ENCODE measurements at regions of chr15 and their contacts with region 1.

Region 1: DNA sequence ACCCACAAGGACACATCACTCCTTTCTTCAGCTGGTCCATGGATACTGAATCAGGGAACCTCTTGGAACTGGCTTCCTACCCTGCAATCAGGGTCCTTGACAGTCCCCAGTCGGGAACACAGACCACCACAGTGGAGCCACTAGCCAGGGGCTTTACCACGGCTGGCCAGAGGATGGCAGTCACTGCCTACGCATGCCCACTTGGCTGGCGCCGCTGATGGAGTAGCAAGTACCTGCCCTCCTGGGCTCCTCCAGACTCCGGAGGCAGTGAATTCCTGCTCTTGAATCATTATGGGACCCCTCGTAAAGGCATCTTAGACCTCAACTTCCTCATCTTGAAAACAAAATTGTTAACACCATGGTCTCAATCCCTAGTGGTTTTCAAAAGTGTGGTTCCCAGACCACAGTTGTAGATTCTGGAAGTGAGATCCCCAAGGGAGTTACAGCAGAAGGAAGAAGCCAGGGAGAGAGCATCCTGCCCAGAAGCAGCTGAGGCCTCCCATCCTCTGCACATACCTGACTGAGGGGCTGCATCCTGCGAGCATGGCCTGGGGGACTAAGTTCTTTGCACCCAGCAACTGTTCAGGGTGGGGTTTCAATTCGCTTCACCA is 9.1 kb upstream of the SKIC8 start:
- DNase-seq: peak; percentile 41 to 86 (median 83)
- H3K4me3 ChIP-seq: peak overlapping the region in 1 of 59 donors; percentile 15
- H3K27ac ChIP-seq: no peak overlapping the region
- H3K27me3 ChIP-seq: peaks cover 0 to 25% (median 0%) of the 10 kb centered on the region in 45 donors
- CTCF ChIP-seq: peak; percentile 55 to 99 (median 91)

Region 2: GRCh38 chr15:78396976-78397375 is 88.4 kb after region 1 on chr15:
- intact Hi-C with region 1: no loop called
- DNase-seq: peak in 3 of 10 donors; percentile 7 to 49 (median 43)
- H3K4me3 ChIP-seq: no peak overlapping the region
- H3K27ac ChIP-seq: peak overlapping the region in 3 of 59 donors; percentile 3 to 16 (median 16)
- H3K27me3 ChIP-seq: peaks cover 0 to 53% (median 0%) of the 10 kb centered on the region in 45 donors
- CTCF ChIP-seq: peak in 20 of 56 donors; percentile 7 to 35 (median 16)

Region 3: GRCh38 chr15:78422571-78423340 is 114.2 kb after region 1 on chr15:
- intact Hi-C with region 1: loop called (anchors 1 to 5 kb)
- DNase-seq: peak; percentile 51 to 77 (median 65)
- H3K4me3 ChIP-seq: no peak overlapping the region
- H3K27ac ChIP-seq: no peak overlapping the region
- H3K27me3 ChIP-seq: peaks cover 0 to 18% (median 0%) of the 10 kb centered on the region in 45 donors
- CTCF ChIP-seq: peak; percentile 76 to 97 (median 92)

Region 4: DNA sequence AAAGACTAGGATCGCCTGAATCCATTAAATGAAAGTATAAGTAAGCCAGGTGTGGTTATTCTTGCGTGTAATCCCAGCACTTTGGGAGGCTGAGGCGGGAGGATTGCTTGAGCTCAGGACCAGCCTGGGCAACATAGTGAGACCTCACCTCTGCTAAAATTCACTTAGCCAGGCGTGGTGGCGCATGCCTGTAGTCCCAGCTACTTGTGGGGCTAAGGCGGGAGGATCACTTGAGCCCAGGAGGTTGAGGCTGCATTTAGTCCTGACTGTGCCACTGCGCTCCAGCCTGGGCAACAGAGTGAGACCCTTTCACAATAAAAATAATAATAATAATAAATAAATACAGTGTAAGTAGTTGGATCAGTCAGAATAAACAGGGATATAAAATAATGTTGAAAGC is 173.4 kb after region 1 on chr15:
- intact Hi-C with region 1: loop called in 1 of 2 experiments (anchors 5 kb)
- DNase-seq: no peak
- H3K4me3 ChIP-seq: no peak overlapping the region
- H3K27ac ChIP-seq: peak overlapping the region in 2 of 59 donors; percentile 24 to 57
- H3K27me3 ChIP-seq: no peaks in the 10 kb centered on the region
- CTCF ChIP-seq: no peak

Region 5: DNA sequence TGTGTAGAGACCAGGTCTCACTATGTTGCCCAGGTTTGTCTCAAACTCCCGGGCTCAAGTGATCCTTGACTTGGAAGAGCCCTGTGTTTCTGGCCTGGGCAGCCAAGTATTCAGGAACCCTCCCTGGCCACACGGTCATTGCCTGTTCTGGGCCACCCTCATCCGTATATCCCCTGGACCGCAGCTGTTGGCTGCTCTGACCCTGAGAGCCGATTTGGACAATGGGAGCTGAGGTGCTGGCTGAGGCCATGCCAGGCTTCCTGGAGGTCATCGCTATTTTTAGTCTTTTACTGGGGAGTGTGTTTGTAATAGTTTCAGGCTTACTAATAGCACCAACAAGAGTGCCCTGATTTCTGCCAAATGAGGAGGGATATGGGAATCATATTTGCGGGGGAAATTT is 442.0 kb after region 1 on chr15:
- intact Hi-C with region 1: loop called in 1 of 2 experiments (anchors 5 kb)
- DNase-seq: peak in 3 of 10 donors; percentile 14 to 40 (median 22)
- H3K4me3 ChIP-seq: peak overlapping the region in 38 of 59 donors; percentile 1 to 51 (median 28)
- H3K27ac ChIP-seq: peak overlapping the region in 19 of 59 donors; percentile 3 to 82 (median 46)
- H3K27me3 ChIP-seq: no peaks in the 10 kb centered on the region
- CTCF ChIP-seq: no peak